Dendritic cell treated with granulocyte-macrophage colony-stimulating factor and Interleukin-4, amounts not matched to agents 40 ng/mL and 50 ng/mL, for 4 days (primary cell): ENCODE measurements at regions of chr9 and their contacts with region 1.

Region 1: DNA sequence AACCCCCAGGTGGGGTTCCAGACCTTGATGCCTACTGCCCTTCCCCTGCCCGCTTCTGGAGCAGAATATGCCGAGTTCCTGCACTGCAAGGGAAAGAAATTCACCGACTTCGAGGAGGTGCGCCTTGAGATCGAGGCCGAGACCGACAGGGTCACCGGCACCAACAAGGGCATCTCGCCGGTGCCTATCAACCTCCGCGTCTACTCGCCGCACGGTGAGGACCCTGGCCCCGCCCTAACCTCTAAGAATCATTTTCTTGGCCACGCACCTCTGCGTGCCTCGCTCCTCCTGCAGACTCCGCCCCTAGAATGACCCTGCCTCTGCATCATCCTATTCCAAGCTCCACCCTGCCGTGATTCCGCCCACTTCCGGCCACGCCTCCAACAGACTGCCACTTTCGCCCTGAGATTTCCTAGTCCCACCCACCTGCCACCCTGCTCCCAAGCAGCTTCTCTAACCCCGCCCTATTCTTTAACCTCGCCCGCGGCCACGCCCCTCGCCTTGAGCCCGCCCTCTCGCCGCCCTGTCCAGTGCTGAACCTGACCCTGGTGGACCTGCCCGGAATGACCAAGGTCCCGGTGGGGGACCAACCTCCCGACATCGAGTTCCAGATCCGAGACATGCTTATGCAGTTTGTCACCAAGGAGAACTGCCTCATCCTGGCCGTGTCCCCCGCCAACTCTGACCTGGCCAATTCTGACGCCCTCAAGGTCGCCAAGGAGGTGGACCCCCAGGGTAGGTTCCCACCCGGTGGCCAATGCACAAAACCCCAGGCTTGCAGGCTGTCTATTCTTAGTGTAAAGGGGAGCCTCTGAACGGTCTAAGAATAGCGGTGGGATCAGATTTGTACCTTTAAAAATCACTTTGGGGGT is 15.6 kb downstream of the DNM1 start:
- H3K4me3 Mint-ChIP-seq: peak overlapping the region; percentile 74
- H3K27ac Mint-ChIP-seq: peak overlapping the region; percentile 97
- H3K4me1 Mint-ChIP-seq: peaks cover 44% of the 10 kb centered on the region
- H3K27me3 Mint-ChIP-seq: peaks cover 6% of the 10 kb centered on the region

Region 2: GRCh38 chr9:128275996-128276573 is 57.3 kb after region 1 on chr9 and contains the starts of genes GOLGA2 and SWI5:
- intact Hi-C with region 1: loop called (anchors 10 kb)
- H3K4me3 Mint-ChIP-seq: peak within 1 kb of the TSS; percentile 96
- H3K27ac Mint-ChIP-seq: peak within 1 kb of the TSS; percentile 96
- H3K4me1 Mint-ChIP-seq: peaks cover 51% of the 10 kb centered on the region
- H3K27me3 Mint-ChIP-seq: no peaks in the 10 kb centered on the region